ENCODE measurements at regions of chr22 and their contacts with region 1.

Region 1: GRCh38 chr22:19970479-19971275 is 29.1 kb upstream of the TXNRD2 start:
- DNase-seq: peak; percentile 67 to 89 (median 77)
- H3K4me3 ChIP-seq: no peak overlapping the region
- H3K27ac ChIP-seq: peak overlapping the region in 4 of 5 donors; percentile 67 to 84 (median 76)
- H3K4me1 ChIP-seq: peaks cover 15 to 30% of the 10 kb centered on the region in 2 donors
- H3K27me3 ChIP-seq: no peaks in the 10 kb centered on the region
- CTCF ChIP-seq: peak; percentile 80 to 97 (median 92)
- POLR2A ChIP-seq: no peak

Region 2: GRCh38 chr22:20010301-20011122 is 39.8 kb after region 1 on chr22:
- intact Hi-C with region 1: loop called (anchors 1 to 5 kb)
- DNase-seq: peak in 1 of 7 donors; percentile 29
- H3K4me3 ChIP-seq: no peak overlapping the region
- H3K27ac ChIP-seq: peak overlapping the region in 1 of 5 donors; percentile 54
- H3K4me1 ChIP-seq: peaks cover 0 to 13% of the 10 kb centered on the region in 2 donors
- H3K27me3 ChIP-seq: no peaks in the 10 kb centered on the region
- CTCF ChIP-seq: no peak
- POLR2A ChIP-seq: no peak

Region 3: GRCh38 chr22:20016734-20017621 is 46.3 kb after region 1 on chr22 and contains the start of gene ARVCF:
- intact Hi-C with region 1: loop called in 1 of 2 experiments (anchors 5 kb)
- DNase-seq: peak; percentile 89 to 96 (median 93)
- H3K4me3 ChIP-seq: peak within 1 kb of the TSS in 2 of 4 donors; percentile 46 to 85
- H3K27ac ChIP-seq: peak within 1 kb of the TSS in 2 of 5 donors; percentile 23
- H3K4me1 ChIP-seq: peaks cover 13 to 23% of the 10 kb centered on the region in 2 donors
- H3K27me3 ChIP-seq: no peaks in the 10 kb centered on the region
- CTCF ChIP-seq: peak in 5 of 6 experiments; percentile 19 to 43 (median 29)
- POLR2A ChIP-seq: no peak
- total RNA-seq, gene ARVCF: 8.4 to 46.1 (median 18.4) TPM

Region 4: DNA sequence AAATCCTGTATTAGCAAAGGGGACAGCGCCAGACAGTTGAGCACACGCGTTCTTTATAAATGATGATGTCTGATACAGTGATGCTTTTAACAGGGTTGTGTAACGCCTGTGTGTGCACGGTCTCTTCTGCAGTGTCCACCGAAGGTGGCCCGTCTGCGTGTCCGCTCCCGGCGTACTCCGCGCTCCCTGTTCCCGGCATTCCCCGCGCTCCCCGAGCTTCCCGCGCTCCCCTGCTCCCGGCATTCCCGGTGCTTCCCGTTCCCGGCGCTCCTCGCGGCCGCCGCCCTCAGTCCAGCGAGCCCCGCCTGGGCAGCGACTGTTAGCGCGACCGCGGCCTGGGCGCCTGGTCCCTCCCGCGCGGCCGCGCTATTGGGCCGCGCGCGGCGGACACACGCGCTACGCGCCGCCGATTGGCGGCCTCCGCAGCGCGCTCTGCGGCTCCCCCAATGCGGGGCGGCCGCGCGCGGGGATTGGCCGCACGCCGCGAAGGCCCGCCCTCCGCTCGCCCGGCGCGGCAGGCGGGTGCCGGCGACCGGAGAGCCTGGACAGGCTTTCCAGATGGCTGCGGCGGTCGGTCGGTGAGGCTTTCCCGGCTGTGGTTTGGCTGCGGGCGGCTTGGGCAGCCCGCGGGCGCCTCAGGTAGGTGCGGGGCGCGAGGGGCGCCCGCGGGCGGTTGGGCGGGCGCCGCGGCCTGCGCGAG is 109.2 kb after region 1 on chr22 and contains the start of gene DGCR8:
- intact Hi-C with region 1: loop called in 1 of 2 experiments (anchors 10 kb)
- DNase-seq: peak; percentile 92 to 96 (median 93)
- H3K4me3 ChIP-seq: peak within 1 kb of the TSS in 3 of 4 donors; percentile 62 to 81 (median 79)
- H3K27ac ChIP-seq: peak within 1 kb of the TSS; percentile 60 to 96 (median 86)
- H3K4me1 ChIP-seq: peaks cover 11 to 43% of the 10 kb centered on the region in 2 donors
- H3K27me3 ChIP-seq: no peaks in the 10 kb centered on the region
- CTCF ChIP-seq: no peak
- POLR2A ChIP-seq: peak; percentile 19 to 51
- total RNA-seq, gene DGCR8: 7.2 to 32.2 (median 21.6) TPM

Region 5: DNA sequence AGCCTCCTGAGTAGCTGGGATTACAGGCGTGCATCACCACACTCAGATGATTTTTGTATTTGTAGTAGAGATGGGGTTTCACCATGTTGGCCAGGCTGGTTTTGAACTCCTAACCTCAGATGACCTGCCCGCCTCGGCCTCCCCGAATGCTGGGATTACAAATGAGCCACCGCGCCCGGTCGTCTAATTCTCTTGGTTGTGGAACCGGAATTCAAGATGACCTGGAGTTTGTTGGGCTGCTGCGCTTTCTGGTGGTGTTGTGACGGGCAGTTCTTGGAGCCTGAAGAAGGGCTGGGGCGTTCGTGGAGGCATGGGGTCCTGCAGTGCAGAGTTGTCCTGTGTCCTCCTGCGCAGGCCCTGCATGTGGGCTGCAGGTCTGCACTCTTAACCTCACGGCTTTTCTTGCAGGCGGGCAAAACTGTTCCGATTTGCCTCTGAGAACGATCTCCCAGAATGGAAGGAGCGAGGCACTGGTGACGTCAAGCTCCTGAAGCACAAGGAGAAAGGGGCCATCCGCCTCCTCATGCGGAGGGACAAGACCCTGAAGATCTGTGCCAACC is 151.3 kb after region 1 on chr22:
- intact Hi-C with region 1: loop called in 1 of 2 experiments (anchors 5 kb)
- DNase-seq: no peak
- H3K4me3 ChIP-seq: no peak overlapping the region
- H3K27ac ChIP-seq: no peak overlapping the region
- H3K4me1 ChIP-seq: peaks cover 22 to 33% of the 10 kb centered on the region in 2 donors
- H3K27me3 ChIP-seq: no peaks in the 10 kb centered on the region
- CTCF ChIP-seq: no peak
- POLR2A ChIP-seq: no peak

Region 6: DNA sequence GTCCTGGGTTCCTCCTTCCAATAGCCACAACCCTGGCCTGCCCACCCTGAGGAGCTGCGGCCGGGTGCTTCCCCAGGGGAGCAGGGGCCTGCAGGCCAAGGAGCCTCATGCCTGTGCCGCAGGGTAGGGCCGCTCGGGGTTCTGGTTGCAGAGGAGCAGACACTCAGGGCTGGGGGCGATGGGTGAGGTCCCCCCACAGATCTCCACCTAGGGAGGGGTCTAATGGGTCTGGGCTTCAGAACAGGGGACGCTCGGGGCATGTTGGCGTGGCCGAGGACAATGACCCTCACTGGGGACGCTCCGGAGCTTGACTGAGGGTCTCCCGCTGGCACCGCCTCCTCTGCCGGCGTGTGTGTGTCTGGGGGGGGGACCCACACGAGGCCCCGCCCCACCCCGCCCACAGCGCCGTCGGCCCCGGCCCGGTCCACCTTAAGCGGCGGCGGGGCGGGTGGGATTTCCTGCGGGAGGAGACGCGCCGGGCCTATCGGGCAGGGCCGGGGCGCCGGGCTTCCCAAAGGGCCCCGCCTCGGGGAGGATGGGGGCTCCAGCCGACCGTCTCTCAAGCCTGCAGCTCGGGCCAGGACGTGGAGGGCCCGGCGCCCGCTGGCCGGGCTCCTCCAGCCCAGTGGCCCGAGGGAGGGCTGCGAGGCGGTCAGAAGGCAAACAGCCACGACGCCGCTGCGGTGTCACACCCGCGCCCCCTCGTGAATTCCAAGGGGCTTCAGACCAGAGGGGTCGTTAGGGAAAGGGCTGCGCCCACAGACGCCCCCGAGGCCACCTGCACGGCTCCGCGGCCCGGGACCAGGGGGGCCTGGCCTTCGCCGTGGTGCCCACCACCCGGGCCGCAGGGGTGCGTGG is 160.3 kb after region 1 on chr22:
- intact Hi-C with region 1: loop called in 1 of 2 experiments (anchors 5 kb)
- DNase-seq: peak; percentile 80 to 92 (median 89)
- H3K4me3 ChIP-seq: peak overlapping the region; percentile 35 to 100 (median 46)
- H3K27ac ChIP-seq: peak overlapping the region in 4 of 5 donors; percentile 81 to 97 (median 86)
- H3K4me1 ChIP-seq: peaks cover 14 to 34% of the 10 kb centered on the region in 2 donors
- H3K27me3 ChIP-seq: no peaks in the 10 kb centered on the region
- CTCF ChIP-seq: no peak
- POLR2A ChIP-seq: peak; percentile 24 to 76

Measured in adrenal gland (tissue), 19 donors.